ENCODE measurements at regions of chr5 and their contacts with region 1.

Region 1: GRCh38 chr5:112671687-112672086 is 66.0 kb upstream of the APC start:
- DNase-seq: no peak
- H3K4me3 ChIP-seq: no peak overlapping the region
- H3K27ac ChIP-seq: no peak overlapping the region
- H3K4me1 ChIP-seq: no peaks in the 10 kb centered on the region
- H3K27me3 ChIP-seq: no peaks in the 10 kb centered on the region
- CTCF ChIP-seq: no peak
- POLR2A ChIP-seq: no peak

Region 2: DNA sequence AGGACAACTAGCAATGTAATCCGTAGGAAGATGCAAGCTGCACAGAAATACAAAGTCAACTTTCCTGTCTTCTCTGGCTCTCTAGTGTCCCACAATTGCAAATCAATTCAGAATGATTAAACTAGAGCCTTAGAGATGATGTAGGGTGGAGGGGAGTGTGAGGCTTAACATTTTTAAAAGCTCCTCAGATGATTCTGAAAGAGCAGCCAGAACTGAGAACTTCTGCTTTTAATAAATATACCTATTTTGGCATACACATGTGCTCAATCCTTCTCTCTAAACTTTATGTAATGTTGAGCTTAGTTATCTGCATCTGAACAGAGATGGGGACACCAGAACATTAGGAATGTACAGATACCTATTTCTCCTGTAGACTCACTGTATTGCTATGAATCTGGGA is 73.9 kb before region 1 on chr5:
- intact Hi-C with region 1: loop called (anchors 2 kb)
- DNase-seq: no peak
- H3K4me3 ChIP-seq: no peak overlapping the region
- H3K27ac ChIP-seq: no peak overlapping the region
- H3K4me1 ChIP-seq: no peaks in the 10 kb centered on the region
- H3K27me3 ChIP-seq: no peaks in the 10 kb centered on the region
- CTCF ChIP-seq: no peak
- POLR2A ChIP-seq: no peak

Measured in breast epithelium (tissue), 4 donors.